ENCODE measurements at regions of chr1 and their contacts with region 1.

Region 1: DNA sequence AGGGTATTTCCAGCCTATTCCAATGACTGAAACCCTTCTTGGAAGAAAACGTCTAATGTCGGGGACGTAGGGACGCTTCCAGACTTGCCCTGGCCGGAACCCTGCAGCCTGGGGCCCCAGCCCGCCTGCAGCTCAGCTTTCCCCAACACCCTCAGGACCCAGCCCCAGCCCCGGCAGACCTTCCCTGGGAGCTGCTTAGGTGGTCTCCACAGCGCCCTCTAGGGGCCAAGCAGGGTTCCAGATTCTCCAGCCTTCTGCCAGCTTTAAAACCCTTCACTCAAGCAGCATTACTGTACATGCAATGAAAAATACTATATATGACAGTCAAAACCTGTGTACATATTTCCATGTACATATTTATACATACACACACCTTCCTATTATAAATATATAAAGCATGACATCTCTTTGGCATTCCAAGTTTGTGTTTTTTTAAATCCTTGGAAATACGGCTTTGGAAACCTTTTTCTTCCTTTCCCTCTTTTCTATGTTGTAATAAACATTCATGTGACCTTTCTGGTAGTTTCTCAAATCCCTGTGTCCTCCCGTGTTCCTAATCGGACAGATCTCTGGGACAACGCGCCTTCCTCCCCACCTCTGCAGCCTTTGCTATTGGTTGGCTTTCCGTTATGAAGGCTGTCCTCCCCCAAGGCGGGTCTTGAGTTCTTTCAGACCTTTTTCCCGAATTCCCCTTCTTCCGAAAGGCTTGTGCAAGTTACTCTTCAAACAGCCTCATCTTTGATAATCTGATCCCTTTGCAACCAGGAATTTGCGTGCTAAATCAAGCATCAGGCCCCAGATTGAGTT is 60.3 kb downstream of the STUM start:
- DNase-seq: peak; percentile 81 to 93 (median 88)
- ATAC-seq: peak; percentile 94
- H3K4me3 ChIP-seq: no peak overlapping the region
- H3K27ac ChIP-seq: no peak overlapping the region
- H3K4me1 ChIP-seq: no peaks in the 10 kb centered on the region
- H3K27me3 ChIP-seq: peaks cover 38 to 69% of the 10 kb centered on the region in 2 experiments
- CTCF ChIP-seq: peak; percentile 83 to 93 (median 91)
- EP300 ChIP-seq: no peak
- POLR2A ChIP-seq: no peak
- RAD21 ChIP-seq: peak; percentile 58 to 66

Region 2: GRCh38 chr1:226424228-226425003 is 184.5 kb before region 1 on chr1:
- CTCF ChIA-PET with region 1: no interaction called
- POLR2A ChIA-PET with region 1: interaction called, 3 read pairs
- in situ Hi-C with region 1: no loop called
- intact Hi-C with region 1: loop called (anchors 2 kb)
- DNase-seq: peak in 2 of 4 experiments; percentile 52 to 61
- ATAC-seq: peak; percentile 92
- H3K4me3 ChIP-seq: no peak overlapping the region
- H3K27ac ChIP-seq: no peak overlapping the region
- H3K4me1 ChIP-seq: no peaks in the 10 kb centered on the region; a peak in 1 of 5 replicates
- H3K27me3 ChIP-seq: peaks cover 24 to 40% of the 10 kb centered on the region in 2 experiments
- CTCF ChIP-seq: peak; percentile 63 to 85 (median 67)
- EP300 ChIP-seq: no peak
- POLR2A ChIP-seq: no peak
- RAD21 ChIP-seq: peak; percentile 81 to 82

Region 3: DNA sequence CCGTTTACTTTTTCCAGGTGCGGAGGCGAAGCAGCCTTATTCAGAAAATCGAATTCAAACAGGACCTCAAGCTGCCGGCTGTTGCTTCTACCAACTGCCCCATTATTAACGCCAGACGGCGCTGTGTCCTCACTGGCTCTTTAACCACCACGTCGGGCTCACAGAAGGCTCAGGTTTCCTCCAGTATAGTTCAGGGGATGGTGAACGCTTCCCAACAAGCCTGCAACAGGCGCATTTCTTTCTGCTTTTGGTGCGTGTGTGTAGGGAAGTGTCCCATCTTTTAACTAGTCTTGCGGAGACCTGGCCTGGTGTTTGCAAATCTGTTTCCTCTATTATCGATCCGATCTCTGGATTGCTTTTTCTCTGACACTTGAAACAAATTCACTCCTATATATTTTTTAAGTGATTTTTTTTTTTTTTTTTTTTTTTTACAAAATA is 61.1 kb before region 1 on chr1:
- CTCF ChIA-PET with region 1: interaction called, 3 read pairs
- POLR2A ChIA-PET with region 1: no interaction called
- in situ Hi-C with region 1: no loop called
- intact Hi-C with region 1: loop called (anchors 1 kb)
- DNase-seq: peak; percentile 69 to 83 (median 77)
- ATAC-seq: peak; percentile 97
- H3K4me3 ChIP-seq: no peak overlapping the region
- H3K27ac ChIP-seq: no peak overlapping the region
- H3K4me1 ChIP-seq: peaks cover 0 to 18% of the 10 kb centered on the region in 2 experiments; a peak in 3 of 5 replicates
- H3K27me3 ChIP-seq: peaks cover 7 to 48% of the 10 kb centered on the region in 2 experiments
- CTCF ChIP-seq: peak; percentile 92 to 97 (median 97)
- EP300 ChIP-seq: no peak
- POLR2A ChIP-seq: no peak
- RAD21 ChIP-seq: peak; percentile 86 to 88

Region 4: GRCh38 chr1:226626577-226626956 is 17.7 kb after region 1 on chr1:
- CTCF ChIA-PET with region 1: no interaction called
- POLR2A ChIA-PET with region 1: no interaction called
- in situ Hi-C with region 1: no loop called
- intact Hi-C with region 1: no loop called
- DNase-seq: peak; percentile 78 to 89 (median 86)
- ATAC-seq: peak; percentile 97
- H3K4me3 ChIP-seq: no peak overlapping the region
- H3K27ac ChIP-seq: no peak overlapping the region
- H3K4me1 ChIP-seq: no peaks in the 10 kb centered on the region
- H3K27me3 ChIP-seq: peaks cover 3 to 47% of the 10 kb centered on the region in 2 experiments; a peak in 3 of 5 replicates
- CTCF ChIP-seq: peak; percentile 95 to 98 (median 97)
- EP300 ChIP-seq: no peak
- POLR2A ChIP-seq: no peak
- RAD21 ChIP-seq: peak; percentile 60 to 80

Measured in K562 (cell line).